Sigmoid colon (tissue), 7 donors: ENCODE measurements at regions of chr18 and their contacts with region 1.

Region 1: DNA sequence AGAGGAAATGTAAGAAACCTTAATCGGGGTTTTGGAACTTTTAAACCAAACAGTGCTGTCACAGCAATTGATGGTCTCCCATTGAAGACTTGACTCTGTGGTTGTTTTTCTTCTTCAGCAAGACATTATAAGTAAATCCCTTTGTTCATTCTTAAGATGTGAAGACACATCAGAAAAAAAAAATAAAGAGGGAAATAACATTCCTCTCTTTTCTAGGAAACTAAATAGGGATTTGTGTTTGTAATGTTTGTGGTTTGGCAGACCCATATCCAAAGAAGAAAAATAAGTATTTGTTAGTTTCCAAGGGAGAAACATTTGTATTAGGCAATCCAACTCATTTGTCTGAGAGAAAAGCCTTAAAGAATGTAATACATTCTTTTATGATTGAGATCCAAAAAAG is 359.9 kb downstream of the DSC3 start:
- DNase-seq: no peak
- H3K4me3 ChIP-seq: no peak overlapping the region
- H3K27ac ChIP-seq: peak overlapping the region in 2 of 4 donors; percentile 8 to 51
- H3K4me1 ChIP-seq: no peaks in the 10 kb centered on the region
- H3K27me3 ChIP-seq: no peaks in the 10 kb centered on the region
- CTCF ChIP-seq: no peak
- EP300 ChIP-seq: no peak
- POLR2A ChIP-seq: no peak

Region 2: GRCh38 chr18:30623401-30624065 is 59.1 kb before region 1 on chr18:
- intact Hi-C with region 1: loop called (anchors 10 kb)
- DNase-seq: no peak
- H3K4me3 ChIP-seq: no peak overlapping the region
- H3K27ac ChIP-seq: no peak overlapping the region
- H3K4me1 ChIP-seq: no peaks in the 10 kb centered on the region
- H3K27me3 ChIP-seq: no peaks in the 10 kb centered on the region
- CTCF ChIP-seq: no peak
- EP300 ChIP-seq: no peak
- POLR2A ChIP-seq: no peak